PC-9 (cell line): ENCODE measurements at regions of chr10 and their contacts with region 1.

Region 1: GRCh38 chr10:68526626-68527307 is 556 bp downstream of the SLC25A16 start:
- DNase-seq: no peak
- H3K4me3 ChIP-seq: peak overlapping the region; percentile 92
- H3K27ac ChIP-seq: peak overlapping the region; percentile 66
- H3K4me1 ChIP-seq: peaks cover 9% of the 10 kb centered on the region
- H3K27me3 ChIP-seq: no peaks in the 10 kb centered on the region
- CTCF ChIP-seq: no peak

Region 2: DNA sequence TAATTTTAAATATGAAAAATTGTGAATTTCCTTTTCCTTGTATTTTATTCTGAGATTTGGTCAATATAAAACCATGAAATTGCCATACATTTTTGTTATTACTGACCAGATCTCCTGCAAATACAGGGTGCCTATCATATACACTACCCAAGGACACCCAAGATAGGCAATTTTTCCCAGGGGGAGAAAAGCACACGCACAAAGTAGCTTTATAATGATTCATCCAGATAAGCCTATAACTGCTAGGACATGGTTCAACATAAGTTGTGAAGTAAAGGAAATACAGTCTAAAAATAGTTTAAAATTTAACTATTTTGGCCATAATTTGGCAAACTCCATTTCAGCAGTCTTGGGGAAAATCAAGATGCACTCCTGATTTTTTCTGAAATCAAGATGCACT is 124.5 kb before region 1 on chr10:
- CTCF ChIA-PET with region 1: no interaction called
- POLR2A ChIA-PET with region 1: no interaction called
- intact Hi-C with region 1: no loop called
- DNase-seq: no peak
- H3K4me3 ChIP-seq: no peak overlapping the region
- H3K27ac ChIP-seq: no peak overlapping the region
- H3K4me1 ChIP-seq: peaks cover 9% of the 10 kb centered on the region
- H3K27me3 ChIP-seq: no peaks in the 10 kb centered on the region
- CTCF ChIP-seq: no peak

Region 3: DNA sequence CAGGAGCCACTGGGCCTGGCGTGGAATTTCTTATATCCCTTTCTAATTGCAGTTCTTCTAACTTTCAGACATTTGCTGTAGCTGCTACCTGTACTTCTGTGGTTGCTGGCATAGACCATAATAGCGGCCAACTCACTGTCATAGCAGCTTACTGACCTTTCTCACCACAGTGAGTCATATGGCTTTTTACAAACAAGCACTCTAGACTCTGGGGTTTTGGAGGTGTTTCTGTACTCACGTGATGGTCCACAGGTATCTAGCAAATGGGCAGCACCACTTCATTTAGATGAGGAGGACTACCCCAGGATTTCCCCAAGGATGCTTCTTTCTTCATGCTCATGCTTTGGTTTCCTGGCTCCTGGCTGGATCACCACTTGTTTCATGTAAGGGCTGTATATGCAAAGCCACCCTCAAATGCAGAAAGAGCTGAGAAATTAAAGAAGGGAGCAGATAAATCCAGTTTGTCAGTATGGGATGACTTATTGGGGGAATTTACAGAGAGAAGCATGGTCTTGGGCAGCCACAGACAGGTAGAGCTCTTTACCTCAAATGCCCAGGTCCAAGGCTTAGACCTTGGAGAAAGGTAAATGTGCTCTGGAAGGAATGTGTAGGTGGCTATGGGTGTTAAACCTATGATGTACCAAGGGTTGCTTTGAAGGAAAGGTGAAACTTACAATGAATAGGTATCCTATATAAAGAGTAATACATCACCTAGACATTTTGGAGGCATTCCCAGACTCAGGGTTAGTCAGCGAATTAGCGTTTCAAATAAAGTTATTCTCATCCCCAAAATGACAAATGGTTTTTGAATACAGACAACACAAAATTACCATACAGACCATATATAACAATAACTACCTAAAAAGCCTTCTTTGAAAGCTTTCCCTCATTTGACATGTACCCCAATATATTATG is 16.5 kb after region 1 on chr10:
- CTCF ChIA-PET with region 1: no interaction called
- POLR2A ChIA-PET with region 1: no interaction called
- intact Hi-C with region 1: loop called (anchors 2 kb)
- DNase-seq: peak; percentile 63 to 95
- H3K4me3 ChIP-seq: no peak overlapping the region
- H3K27ac ChIP-seq: peak overlapping the region; percentile 58
- H3K4me1 ChIP-seq: peaks cover 30% of the 10 kb centered on the region
- H3K27me3 ChIP-seq: no peaks in the 10 kb centered on the region
- CTCF ChIP-seq: no peak

Region 4: DNA sequence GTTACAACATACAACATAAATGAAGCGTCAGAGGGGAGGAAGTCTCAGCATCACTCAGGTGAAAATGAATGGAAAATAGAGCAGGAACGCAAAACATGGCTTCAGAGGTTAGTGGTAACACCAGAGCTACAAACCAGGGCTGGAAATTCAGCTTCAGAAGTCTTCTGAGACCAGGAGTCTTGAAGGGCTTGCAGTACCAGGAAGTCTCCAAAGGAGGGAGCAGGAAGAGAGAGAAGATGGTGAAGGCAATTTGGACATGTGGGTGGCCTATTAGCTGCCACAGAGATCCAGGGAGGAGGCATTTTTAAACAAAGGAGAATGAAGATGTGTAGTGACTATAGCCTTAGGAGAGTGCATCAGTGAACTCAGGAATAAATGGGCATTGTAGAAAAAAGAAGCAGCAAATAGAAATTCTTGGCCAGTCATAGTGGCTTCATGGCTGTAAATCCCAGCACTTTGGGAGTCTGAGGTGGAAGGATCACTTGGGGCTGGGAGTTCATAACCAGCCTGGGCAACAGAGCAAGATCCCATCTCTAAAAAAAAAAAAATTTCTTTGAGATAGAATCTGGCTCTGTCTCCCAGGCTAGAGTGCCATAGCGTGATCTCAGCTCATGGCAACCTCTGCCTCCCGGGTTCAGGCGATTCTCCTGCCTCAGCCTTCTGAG is 24.1 kb after region 1 on chr10:
- CTCF ChIA-PET with region 1: interaction called, 10 read pairs
- POLR2A ChIA-PET with region 1: no interaction called
- intact Hi-C with region 1: no loop called
- DNase-seq: peak in 1 of 2 experiments; percentile 49
- H3K4me3 ChIP-seq: no peak overlapping the region
- H3K27ac ChIP-seq: no peak overlapping the region
- H3K4me1 ChIP-seq: peaks cover 18% of the 10 kb centered on the region
- H3K27me3 ChIP-seq: no peaks in the 10 kb centered on the region
- CTCF ChIP-seq: peak; percentile 79

Region 5: GRCh38 chr10:68560186-68560942 is 33.6 kb after region 1 on chr10 and contains the start of gene TET1:
- CTCF ChIA-PET with region 1: no interaction called
- POLR2A ChIA-PET with region 1: no interaction called
- intact Hi-C with region 1: loop called (anchors 5 kb)
- DNase-seq: peak in 1 of 2 experiments; percentile 41
- H3K4me3 ChIP-seq: peak within 1 kb of the TSS; percentile 68
- H3K27ac ChIP-seq: no peak within 1 kb of the TSS
- H3K4me1 ChIP-seq: no peaks in the 10 kb centered on the region
- H3K27me3 ChIP-seq: peaks cover 15% of the 10 kb centered on the region; the same call in 1 of the 2 replicates
- CTCF ChIP-seq: no peak
- total RNA-seq, gene TET1: 1.9 and 2.4 TPM in 2 replicates

Region 6: GRCh38 chr10:68600041-68600778 is 73.4 kb after region 1 on chr10:
- CTCF ChIA-PET with region 1: no interaction called
- POLR2A ChIA-PET with region 1: no interaction called
- intact Hi-C with region 1: loop called (anchors 2 kb)
- DNase-seq: peak; percentile 57 to 67
- H3K4me3 ChIP-seq: peak overlapping the region; percentile 53
- H3K27ac ChIP-seq: no peak overlapping the region
- H3K4me1 ChIP-seq: peaks cover 11% of the 10 kb centered on the region
- H3K27me3 ChIP-seq: no peaks in the 10 kb centered on the region
- CTCF ChIP-seq: no peak

Region 7: DNA sequence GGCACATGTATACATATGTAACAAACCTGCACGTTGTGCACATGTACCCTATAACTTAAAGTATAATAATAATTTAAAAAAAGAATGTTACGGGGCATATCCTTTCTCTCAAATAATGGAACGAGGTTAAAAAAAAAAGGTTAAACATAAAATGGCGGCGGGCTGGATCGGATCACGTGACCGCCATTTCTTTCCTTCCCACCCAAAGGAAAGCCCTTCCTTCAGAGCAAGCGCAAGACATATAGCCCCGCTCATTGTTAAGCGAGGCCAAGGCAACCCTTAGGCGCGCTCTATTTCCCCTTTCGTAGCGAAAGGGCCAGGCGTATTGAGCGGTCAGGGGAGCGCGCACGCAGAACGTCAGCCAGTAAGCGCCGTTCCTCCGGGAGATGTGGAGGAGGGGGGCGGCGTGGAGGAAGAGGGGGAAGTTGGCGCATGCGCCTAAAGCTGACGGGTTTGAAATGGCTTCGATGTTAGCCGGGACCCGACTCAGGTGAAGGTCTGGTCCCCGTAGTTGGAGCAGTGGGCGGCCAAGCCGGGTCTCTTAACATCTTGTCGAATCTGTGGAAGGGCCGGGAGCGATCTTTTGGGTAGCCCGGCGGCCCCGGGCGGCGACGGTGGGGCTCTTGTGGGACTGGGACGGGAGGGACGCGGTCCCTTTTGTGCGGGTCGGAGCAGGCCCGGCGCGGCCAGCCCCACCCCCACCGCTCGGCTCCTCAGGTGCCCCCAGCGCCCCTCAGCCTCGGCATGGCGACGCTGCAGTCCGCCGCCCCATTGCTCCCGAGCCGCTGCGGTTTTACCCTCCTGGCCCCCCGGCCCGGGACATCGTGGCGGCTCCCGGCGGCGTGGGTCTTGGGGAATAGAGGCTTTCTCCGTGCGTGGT is 194.3 kb after region 1 on chr10 and contains the start of gene CCAR1:
- CTCF ChIA-PET with region 1: no interaction called
- POLR2A ChIA-PET with region 1: no interaction called
- intact Hi-C with region 1: loop called (anchors 1 kb)
- DNase-seq: peak; percentile 96 to 97
- H3K4me3 ChIP-seq: peak within 1 kb of the TSS; percentile 85
- H3K27ac ChIP-seq: peak within 1 kb of the TSS; percentile 87
- H3K4me1 ChIP-seq: peaks cover 10% of the 10 kb centered on the region
- H3K27me3 ChIP-seq: no peaks in the 10 kb centered on the region
- CTCF ChIP-seq: no peak
- total RNA-seq, gene CCAR1: 66.1 and 98.3 TPM in 2 replicates

Region 8: GRCh38 chr10:68955832-68956532 is 429.2 kb after region 1 on chr10 and contains the start of gene DDX21:
- CTCF ChIA-PET with region 1: no interaction called
- POLR2A ChIA-PET with region 1: no interaction called
- intact Hi-C with region 1: loop called (anchors 5 kb)
- DNase-seq: peak; percentile 88 to 92
- H3K4me3 ChIP-seq: peak within 1 kb of the TSS; percentile 85
- H3K27ac ChIP-seq: peak within 1 kb of the TSS; percentile 86
- H3K4me1 ChIP-seq: peaks cover 29% of the 10 kb centered on the region
- H3K27me3 ChIP-seq: no peaks in the 10 kb centered on the region
- CTCF ChIP-seq: peak; percentile 81
- total RNA-seq, gene DDX21: 65.8 and 88.0 TPM in 2 replicates